PC-9 (cell line): ENCODE measurements at regions of chr5 and their contacts with region 1.

Region 1: DNA sequence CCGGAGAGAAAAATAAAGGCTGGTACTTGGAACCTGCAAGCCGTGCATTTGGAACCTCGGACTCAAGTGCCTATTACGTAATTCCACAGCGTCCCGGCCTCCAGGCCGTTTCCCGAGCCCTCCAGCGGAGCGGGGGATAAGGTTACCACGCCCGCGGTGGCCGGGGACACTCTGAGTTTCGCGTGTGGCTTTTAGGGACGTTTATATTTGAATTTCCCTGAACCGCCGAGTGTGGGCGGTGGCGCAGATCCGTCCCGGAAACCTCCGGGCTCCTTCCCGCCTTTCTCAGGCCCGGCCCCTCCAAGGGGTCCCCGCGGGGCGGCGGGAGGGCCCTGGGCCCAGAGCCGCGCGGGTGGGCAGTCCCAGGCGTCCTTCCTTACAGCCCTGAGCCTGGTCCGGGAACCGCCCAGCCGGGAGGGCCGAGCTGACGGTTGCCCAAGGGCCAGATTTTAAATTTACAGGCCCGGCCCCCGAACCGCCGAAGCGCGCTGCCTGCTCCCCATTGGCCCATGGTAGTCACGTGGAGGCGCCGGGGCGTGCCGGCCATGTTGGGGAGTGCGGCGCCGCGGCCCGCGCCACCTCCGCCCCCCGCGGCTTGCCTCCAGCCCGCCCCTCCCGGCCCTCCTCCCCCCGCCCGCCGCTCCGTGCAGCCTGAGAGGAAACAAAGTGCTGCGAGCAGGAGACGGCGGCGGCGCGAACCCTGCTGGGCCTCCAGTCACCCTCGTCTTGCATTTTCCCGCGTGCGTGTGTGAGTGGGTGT is at the start of gene LMNB1:
- DNase-seq: peak; percentile 88 to 97
- H3K4me3 ChIP-seq: peak within 1 kb of the TSS; percentile 83
- H3K27ac ChIP-seq: peak within 1 kb of the TSS; percentile 60
- H3K4me1 ChIP-seq: peaks cover 25% of the 10 kb centered on the region
- H3K27me3 ChIP-seq: no peaks in the 10 kb centered on the region
- CTCF ChIP-seq: no peak
- total RNA-seq, gene LMNB1: 103 and 117 TPM in 2 replicates

Region 2: GRCh38 chr5:126594676-126595485 is 181.8 kb before region 1 on chr5 and contains the start of gene ALDH7A1:
- CTCF ChIA-PET with region 1: interaction called, 9 read pairs
- POLR2A ChIA-PET with region 1: no interaction called
- intact Hi-C with region 1: loop called (anchors 10 kb)
- DNase-seq: peak; percentile 84 to 91
- H3K4me3 ChIP-seq: peak within 1 kb of the TSS; percentile 68
- H3K27ac ChIP-seq: peak within 1 kb of the TSS; percentile 45
- H3K4me1 ChIP-seq: peaks cover 20% of the 10 kb centered on the region
- H3K27me3 ChIP-seq: no peaks in the 10 kb centered on the region
- CTCF ChIP-seq: peak; percentile 54
- total RNA-seq, gene ALDH7A1: 109 and 111 TPM in 2 replicates

Region 3: GRCh38 chr5:126656396-126657007 is 120.2 kb before region 1 on chr5:
- CTCF ChIA-PET with region 1: no interaction called
- POLR2A ChIA-PET with region 1: no interaction called
- intact Hi-C with region 1: loop called (anchors 2 kb)
- DNase-seq: peak in 1 of 2 experiments; percentile 42
- H3K4me3 ChIP-seq: no peak overlapping the region
- H3K27ac ChIP-seq: no peak overlapping the region
- H3K4me1 ChIP-seq: no peaks in the 10 kb centered on the region
- H3K27me3 ChIP-seq: no peaks in the 10 kb centered on the region
- CTCF ChIP-seq: peak; percentile 84

Region 4: GRCh38 chr5:126693806-126694802 is 82.6 kb before region 1 on chr5:
- CTCF ChIA-PET with region 1: no interaction called
- POLR2A ChIA-PET with region 1: no interaction called
- intact Hi-C with region 1: no loop called
- DNase-seq: peak in 1 of 2 experiments; percentile 36
- H3K4me3 ChIP-seq: no peak overlapping the region
- H3K27ac ChIP-seq: no peak overlapping the region
- H3K4me1 ChIP-seq: 0 out of 2 replicates have a peak, but pooled peaks cover 5% of the 10 kb centered on the region
- H3K27me3 ChIP-seq: no peaks in the 10 kb centered on the region
- CTCF ChIP-seq: no peak

Region 5: DNA sequence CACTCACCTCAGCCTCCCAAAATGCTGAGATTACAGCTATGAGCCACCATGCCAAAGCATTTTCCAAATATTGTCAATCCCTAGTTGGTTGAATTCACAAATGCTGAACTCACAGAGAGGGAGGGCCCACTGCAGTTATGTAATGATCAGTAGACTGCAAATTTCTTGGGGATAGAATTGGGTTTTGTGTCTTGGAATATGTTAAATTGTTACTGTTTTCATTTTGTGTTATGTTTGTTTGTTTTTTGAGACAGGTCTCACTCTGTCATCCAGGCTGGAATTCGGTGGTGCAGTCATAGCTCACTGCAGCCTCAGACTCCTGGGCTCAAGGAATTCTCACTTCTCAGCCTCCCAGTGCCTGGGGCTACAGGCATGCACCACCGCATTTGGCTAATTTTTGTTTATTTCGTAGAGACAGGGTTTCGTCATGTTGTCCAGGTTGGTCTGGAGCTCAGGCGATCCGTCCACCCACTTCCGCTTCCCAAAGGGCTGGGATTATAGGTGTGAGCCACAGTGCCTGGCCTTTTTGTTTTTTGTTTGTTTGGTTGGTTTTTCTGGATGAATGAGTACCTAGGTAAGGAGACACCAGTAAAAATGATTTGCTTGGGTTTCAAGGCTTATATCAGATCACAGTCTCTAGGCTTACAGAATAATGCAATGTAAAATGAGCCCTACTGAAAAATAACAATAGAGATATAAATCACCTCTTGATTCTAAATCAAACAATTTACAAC is 31.3 kb before region 1 on chr5:
- CTCF ChIA-PET with region 1: interaction called, 6 read pairs
- POLR2A ChIA-PET with region 1: interaction called, 4 read pairs
- intact Hi-C with region 1: loop called (anchors 1 kb)
- DNase-seq: peak; percentile 66 to 92
- H3K4me3 ChIP-seq: peak overlapping the region; percentile 6; the same call in 1 of the 2 replicates
- H3K27ac ChIP-seq: peak overlapping the region; percentile 12
- H3K4me1 ChIP-seq: peaks cover 28% of the 10 kb centered on the region
- H3K27me3 ChIP-seq: no peaks in the 10 kb centered on the region
- CTCF ChIP-seq: no peak

Region 6: DNA sequence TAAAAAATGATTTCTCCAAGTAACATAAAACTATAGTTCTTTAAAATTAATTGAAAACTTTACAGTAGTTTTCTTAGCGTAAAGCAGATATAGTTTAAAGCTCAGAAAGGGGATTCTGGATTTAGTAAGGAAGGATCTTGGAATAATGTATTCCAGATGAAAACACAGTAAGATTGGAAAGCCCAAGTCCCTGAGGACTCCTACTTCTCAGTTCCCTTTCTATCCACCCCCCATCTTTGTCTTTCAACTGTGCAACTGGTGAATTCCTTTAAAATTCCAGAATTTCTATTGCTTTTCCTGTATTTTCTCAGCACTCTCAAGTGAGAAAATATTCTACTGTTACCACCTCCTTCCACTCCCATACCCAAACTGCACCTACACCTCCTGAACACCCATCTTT is 1945.9 kb after region 1 on chr5:
- CTCF ChIA-PET with region 1: interaction called, 14 read pairs
- POLR2A ChIA-PET with region 1: no interaction called
- intact Hi-C with region 1: no loop called
- DNase-seq: no peak
- H3K4me3 ChIP-seq: no peak overlapping the region
- H3K27ac ChIP-seq: no peak overlapping the region
- H3K4me1 ChIP-seq: no peaks in the 10 kb centered on the region
- H3K27me3 ChIP-seq: no peaks in the 10 kb centered on the region
- CTCF ChIP-seq: no peak